B cell (primary cell): ENCODE measurements at regions of chr2 and their contacts with region 1.

Region 1: DNA sequence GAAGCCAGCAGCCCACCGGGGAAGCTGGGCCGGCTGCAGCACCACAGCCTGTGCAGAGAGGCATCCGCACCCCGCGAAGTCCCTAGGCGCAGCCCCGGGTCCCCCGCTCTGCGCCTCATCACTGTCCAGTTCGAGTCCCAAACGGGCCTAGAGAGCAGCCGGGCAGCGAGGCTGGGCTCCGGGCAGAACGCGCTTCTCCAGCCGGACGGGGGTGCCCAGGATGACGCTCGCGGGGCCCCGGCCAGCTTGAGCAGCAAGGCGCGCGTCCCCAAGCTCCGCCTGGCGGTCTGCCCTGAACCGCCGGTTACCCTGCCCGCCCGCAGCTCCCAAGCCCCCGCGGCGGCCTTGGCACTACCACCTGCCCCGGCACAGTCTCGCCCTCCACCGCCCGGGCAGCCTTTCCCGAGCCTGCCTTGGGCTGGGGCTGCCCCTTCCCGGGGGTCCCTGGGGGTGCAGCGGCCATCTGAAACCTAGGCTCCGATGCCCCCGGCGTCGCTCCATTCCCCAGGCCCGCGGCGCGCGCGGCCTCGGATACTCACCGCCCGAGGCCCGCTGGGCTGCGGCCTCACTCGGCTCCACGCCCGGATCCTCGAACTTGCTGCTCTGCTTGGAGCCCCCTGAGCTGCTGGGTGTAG is 591 bp downstream of the SLC16A14 start:
- DNase-seq: peak; percentile 75
- ATAC-seq: peak; percentile 34
- H3K4me3 ChIP-seq: peak overlapping the region; percentile 47 to 76 (median 67)
- H3K4me3 Mint-ChIP-seq: peak overlapping the region; percentile 96
- H3K27ac ChIP-seq: no peak overlapping the region
- H3K27ac Mint-ChIP-seq: peak overlapping the region; percentile 83
- H3K4me1 ChIP-seq: peaks cover 8 to 18% of the 10 kb centered on the region in 2 donors
- H3K4me1 Mint-ChIP-seq: peaks cover 20% of the 10 kb centered on the region
- H3K27me3 ChIP-seq: peaks cover 0 to 9% (median 2%) of the 10 kb centered on the region in 4 experiments
- H3K27me3 Mint-ChIP-seq: peaks cover 13% of the 10 kb centered on the region
- CTCF ChIP-seq: no peak

Region 2: DNA sequence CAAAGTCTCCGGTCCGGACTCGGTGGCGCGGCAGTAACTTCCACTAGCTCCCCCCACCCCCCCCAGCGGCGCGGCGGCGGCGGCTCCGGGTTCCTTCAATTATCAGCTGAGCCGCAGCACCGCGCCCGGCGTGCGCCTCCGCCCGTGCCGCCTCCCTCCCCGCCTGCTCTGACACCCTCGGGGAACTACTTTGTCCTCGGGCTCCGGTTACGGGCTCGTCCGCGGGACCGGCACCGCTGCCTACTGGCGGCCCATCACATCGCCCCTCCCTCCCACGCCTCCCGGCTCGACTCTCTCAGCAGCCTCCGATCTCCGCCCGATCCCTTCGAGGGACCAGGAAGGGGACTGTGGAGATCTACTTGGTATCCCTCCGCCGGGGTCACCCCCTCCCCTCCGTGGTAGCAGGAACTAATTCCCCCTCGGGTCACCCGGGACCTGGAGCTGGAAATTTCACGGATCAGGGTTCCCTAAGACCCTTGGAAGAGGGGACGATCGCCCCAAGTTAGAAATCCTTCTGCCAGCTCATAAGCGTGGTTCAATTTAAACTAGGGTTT is 146.2 kb before region 1 on chr2 and contains the start of gene TRIP12:
- CTCF ChIA-PET with region 1: no interaction called
- POLR2A ChIA-PET with region 1: no interaction called
- intact Hi-C with region 1: loop called (anchors 2 kb)
- DNase-seq: peak; percentile 99
- ATAC-seq: peak; percentile 75
- H3K4me3 ChIP-seq: peak within 1 kb of the TSS; percentile 83 to 98 (median 93)
- H3K4me3 Mint-ChIP-seq: peak within 1 kb of the TSS; percentile 96
- H3K27ac ChIP-seq: peak within 1 kb of the TSS; percentile 83 to 98
- H3K27ac Mint-ChIP-seq: peak within 1 kb of the TSS; percentile 97
- H3K4me1 ChIP-seq: peaks cover 20 to 24% of the 10 kb centered on the region in 2 donors
- H3K4me1 Mint-ChIP-seq: peaks cover 39% of the 10 kb centered on the region
- H3K27me3 ChIP-seq: no peaks in the 10 kb centered on the region
- H3K27me3 Mint-ChIP-seq: no peaks in the 10 kb centered on the region
- CTCF ChIP-seq: no peak
- total RNA-seq, gene TRIP12: 254 and 274 TPM in 2 replicates

Region 3: DNA sequence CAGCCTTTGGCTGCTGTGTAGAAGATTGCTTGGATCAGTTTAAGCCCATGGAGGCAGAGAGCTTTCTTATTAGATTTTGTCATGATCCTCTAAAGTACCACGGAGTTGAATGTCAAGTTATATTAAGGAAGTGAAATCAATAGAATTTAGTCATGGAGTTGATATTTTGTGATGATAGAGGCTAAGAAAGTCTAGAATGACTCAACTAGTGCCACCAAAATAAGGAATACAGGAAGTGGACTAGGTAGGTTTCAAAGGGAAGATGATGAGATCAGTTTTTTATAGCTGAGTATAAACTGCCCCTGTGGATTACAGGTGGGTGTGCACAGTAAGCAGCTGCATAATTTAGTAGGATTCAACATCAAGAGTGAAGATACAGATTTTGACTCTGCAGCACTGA is 120.6 kb before region 1 on chr2:
- CTCF ChIA-PET with region 1: no interaction called
- POLR2A ChIA-PET with region 1: no interaction called
- intact Hi-C with region 1: no loop called
- DNase-seq: no peak
- ATAC-seq: no peak
- H3K4me3 ChIP-seq: no peak overlapping the region
- H3K4me3 Mint-ChIP-seq: no peak overlapping the region
- H3K27ac ChIP-seq: no peak overlapping the region
- H3K27ac Mint-ChIP-seq: no peak overlapping the region
- H3K4me1 ChIP-seq: no peaks in the 10 kb centered on the region
- H3K4me1 Mint-ChIP-seq: peaks cover 2% of the 10 kb centered on the region
- H3K27me3 ChIP-seq: no peaks in the 10 kb centered on the region
- H3K27me3 Mint-ChIP-seq: no peaks in the 10 kb centered on the region
- CTCF ChIP-seq: no peak

Region 4: GRCh38 chr2:230042195-230042594 is 25.9 kb before region 1 on chr2:
- CTCF ChIA-PET with region 1: no interaction called
- POLR2A ChIA-PET with region 1: no interaction called
- intact Hi-C with region 1: no loop called
- DNase-seq: no peak
- ATAC-seq: no peak
- H3K4me3 ChIP-seq: no peak overlapping the region
- H3K4me3 Mint-ChIP-seq: no peak overlapping the region
- H3K27ac ChIP-seq: no peak overlapping the region
- H3K27ac Mint-ChIP-seq: no peak overlapping the region
- H3K4me1 ChIP-seq: no peaks in the 10 kb centered on the region
- H3K4me1 Mint-ChIP-seq: no peaks in the 10 kb centered on the region
- H3K27me3 ChIP-seq: no peaks in the 10 kb centered on the region
- H3K27me3 Mint-ChIP-seq: no peaks in the 10 kb centered on the region
- CTCF ChIP-seq: no peak

Region 5: GRCh38 chr2:230053753-230054478 is 14.2 kb before region 1 on chr2:
- CTCF ChIA-PET with region 1: interaction called, 12 read pairs
- POLR2A ChIA-PET with region 1: interaction called, 3 read pairs
- intact Hi-C with region 1: no loop called
- DNase-seq: no peak
- ATAC-seq: no peak
- H3K4me3 ChIP-seq: no peak overlapping the region
- H3K4me3 Mint-ChIP-seq: no peak overlapping the region
- H3K27ac ChIP-seq: no peak overlapping the region
- H3K27ac Mint-ChIP-seq: no peak overlapping the region
- H3K4me1 ChIP-seq: no peaks in the 10 kb centered on the region
- H3K4me1 Mint-ChIP-seq: peaks cover 5% of the 10 kb centered on the region
- H3K27me3 ChIP-seq: no peaks in the 10 kb centered on the region
- H3K27me3 Mint-ChIP-seq: no peaks in the 10 kb centered on the region
- CTCF ChIP-seq: no peak

Region 6: DNA sequence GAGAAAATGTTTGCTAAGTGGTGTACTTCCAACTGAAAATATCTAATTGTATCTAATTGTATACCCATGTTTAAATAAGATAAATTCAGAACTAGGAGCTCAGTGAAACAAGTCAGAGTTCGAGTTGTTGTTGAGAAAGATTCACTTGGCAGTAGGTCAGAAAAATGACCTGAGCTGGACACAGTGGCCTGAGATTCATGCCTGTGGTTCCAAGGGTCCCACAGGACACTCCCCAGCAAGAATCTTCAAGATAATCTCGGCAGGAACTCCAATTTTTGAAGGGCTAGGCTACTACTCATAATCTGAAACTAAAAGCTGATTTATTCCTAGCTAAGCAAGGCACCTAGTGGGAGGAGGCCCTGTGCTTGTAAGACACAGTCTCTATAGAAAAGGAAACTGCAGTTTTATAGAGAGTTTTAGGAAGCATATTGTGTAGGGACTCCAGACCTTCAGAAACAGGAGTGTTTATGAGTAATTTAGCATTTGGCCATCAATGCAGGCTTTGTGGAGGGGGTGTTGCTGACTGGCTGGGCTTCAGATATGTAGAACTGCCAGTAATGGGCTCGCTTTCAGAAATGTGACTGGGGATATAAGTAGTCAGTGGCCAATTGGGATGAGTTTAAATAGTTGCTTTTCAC is 200.6 kb after region 1 on chr2:
- CTCF ChIA-PET with region 1: interaction called, 3 read pairs
- POLR2A ChIA-PET with region 1: no interaction called
- intact Hi-C with region 1: loop called (anchors 10 kb)
- DNase-seq: no peak
- ATAC-seq: no peak
- H3K4me3 ChIP-seq: no peak overlapping the region
- H3K4me3 Mint-ChIP-seq: peak overlapping the region; percentile 54
- H3K27ac ChIP-seq: peak overlapping the region; percentile 1 to 31
- H3K27ac Mint-ChIP-seq: peak overlapping the region; percentile 84
- H3K4me1 ChIP-seq: peaks cover 32 to 38% of the 10 kb centered on the region in 2 donors
- H3K4me1 Mint-ChIP-seq: peaks cover 64% of the 10 kb centered on the region
- H3K27me3 ChIP-seq: no peaks in the 10 kb centered on the region
- H3K27me3 Mint-ChIP-seq: no peaks in the 10 kb centered on the region
- CTCF ChIP-seq: no peak

Region 7: DNA sequence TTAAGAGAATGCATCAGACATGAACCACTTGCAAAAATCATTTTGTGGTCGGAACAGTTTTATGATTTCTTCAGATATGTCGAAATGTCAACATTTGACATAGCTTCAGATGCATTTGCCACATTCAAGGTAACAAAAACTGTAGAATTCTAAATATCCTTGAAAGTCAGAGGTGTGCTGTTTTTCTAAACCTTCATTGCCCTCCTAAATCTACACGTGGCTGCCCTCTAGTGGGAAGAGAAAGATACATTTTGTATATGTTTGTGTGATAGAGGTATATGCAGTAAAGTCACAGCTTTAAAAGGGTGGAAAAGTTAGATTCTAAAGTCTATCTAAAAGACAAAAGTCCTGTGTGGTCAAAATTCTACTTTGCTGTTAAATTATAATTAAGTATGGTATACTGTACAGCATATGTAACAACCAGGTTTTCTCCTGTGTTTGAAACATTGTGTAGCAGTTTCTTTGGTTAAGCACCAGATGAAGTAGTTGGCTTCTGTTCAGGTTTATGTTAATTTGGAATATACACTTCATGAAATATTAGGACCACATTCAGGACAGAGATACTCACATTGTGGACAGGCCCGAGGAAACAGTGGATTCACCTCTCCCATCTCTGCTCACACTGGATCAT is 730.8 kb after region 1 on chr2:
- CTCF ChIA-PET with region 1: interaction called, 8 read pairs
- POLR2A ChIA-PET with region 1: no interaction called
- intact Hi-C with region 1: loop called (anchors 2 kb)
- DNase-seq: peak; percentile 61
- ATAC-seq: no peak
- H3K4me3 ChIP-seq: no peak overlapping the region
- H3K4me3 Mint-ChIP-seq: no peak overlapping the region
- H3K27ac ChIP-seq: no peak overlapping the region
- H3K27ac Mint-ChIP-seq: peak overlapping the region; percentile 44
- H3K4me1 ChIP-seq: peaks cover 26 to 29% of the 10 kb centered on the region in 2 donors
- H3K4me1 Mint-ChIP-seq: peaks cover 18% of the 10 kb centered on the region
- H3K27me3 ChIP-seq: no peaks in the 10 kb centered on the region
- H3K27me3 Mint-ChIP-seq: no peaks in the 10 kb centered on the region
- CTCF ChIP-seq: peak; percentile 80